Activated T-helper 1 cell treated with anti-CD3 and anti-CD28 coated beads, Interleukin-12 subunit alpha, Interleukin-12 subunit beta, Interleukin-2, Interleukin-4 antibody, amounts not matched to agents 30 ng/mL and 10 ng/mL and 1 ng/mL, durations not matched to agents 14 hours and 24 hours and 36 hours (primary cell): ENCODE measurements at regions of chr20 and their contacts with region 1.

Region 1: GRCh38 chr20:46545077-46545826 is 5.2 kb downstream of the OCSTAMP start:
- DNase-seq: peak; percentile 41
- H3K4me3 Mint-ChIP-seq: peak overlapping the region; percentile 68
- H3K27ac Mint-ChIP-seq: peak overlapping the region; percentile 96
- H3K4me1 Mint-ChIP-seq: peaks cover 11% of the 10 kb centered on the region
- H3K27me3 Mint-ChIP-seq: peaks cover 5% of the 10 kb centered on the region

Region 2: GRCh38 chr20:46307139-46307998 is 237.9 kb before region 1 on chr20:
- intact Hi-C with region 1: no loop called
- DNase-seq: peak; percentile 45
- H3K4me3 Mint-ChIP-seq: peak overlapping the region; percentile 31
- H3K27ac Mint-ChIP-seq: no peak overlapping the region
- H3K4me1 Mint-ChIP-seq: peaks cover 7% of the 10 kb centered on the region
- H3K27me3 Mint-ChIP-seq: peaks cover 71% of the 10 kb centered on the region

Region 3: DNA sequence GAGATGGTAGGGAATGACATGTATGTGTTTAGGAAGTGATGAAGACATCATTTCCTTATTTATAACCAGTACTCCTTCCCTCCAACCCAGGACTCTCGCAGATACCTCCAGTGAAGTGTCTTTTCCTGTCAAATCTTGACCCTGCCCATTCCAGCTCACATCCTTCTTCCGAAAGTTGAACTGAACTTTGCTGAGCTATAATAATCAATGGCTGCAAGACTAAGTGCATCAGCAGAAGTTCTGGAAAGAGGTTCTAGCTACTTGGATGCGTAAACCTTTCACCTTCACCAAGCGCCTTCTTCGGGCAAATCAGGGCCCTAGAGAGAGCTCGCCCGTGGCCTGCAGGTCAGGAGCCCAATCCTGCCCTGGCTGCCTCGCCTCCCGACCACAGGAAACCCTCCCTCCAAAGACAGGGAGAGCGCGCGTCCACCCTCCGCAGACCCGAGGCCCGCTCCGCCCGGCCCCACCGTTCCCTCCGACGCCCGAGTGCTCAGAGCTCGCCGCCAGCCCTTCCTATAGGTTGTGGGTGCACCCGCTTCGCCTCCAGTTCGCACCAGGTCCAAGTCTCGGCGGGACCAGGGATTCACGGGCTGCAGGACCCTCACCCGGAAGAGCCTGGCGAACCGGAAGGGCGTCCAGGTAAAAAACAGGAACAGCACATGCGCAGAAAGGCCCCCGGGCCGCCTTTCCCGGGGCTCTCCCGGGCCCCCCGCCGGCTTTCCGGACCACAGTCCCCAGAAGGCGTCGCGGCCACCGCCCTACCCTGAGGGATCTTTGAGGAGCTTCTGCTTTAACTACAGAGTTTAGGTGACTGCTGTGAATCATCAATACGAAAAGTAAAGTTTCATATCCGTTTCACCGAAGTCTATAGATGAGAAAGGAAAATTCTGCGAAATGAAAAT is 32.1 kb before region 1 on chr20 and contains the start of gene ZNF334:
- intact Hi-C with region 1: loop called (anchors 2 kb)
- DNase-seq: peak; percentile 21
- H3K4me3 Mint-ChIP-seq: peak within 1 kb of the TSS; percentile 81
- H3K27ac Mint-ChIP-seq: peak within 1 kb of the TSS; percentile 59
- H3K4me1 Mint-ChIP-seq: peaks cover 30% of the 10 kb centered on the region
- H3K27me3 Mint-ChIP-seq: no peaks in the 10 kb centered on the region
- total RNA-seq, gene ZNF334: 1.2 and 1.7 TPM in 2 replicates

Region 4: GRCh38 chr20:46562373-46563169 is 17.3 kb after region 1 on chr20:
- intact Hi-C with region 1: loop called (anchors 1 kb)
- DNase-seq: peak; percentile 53
- H3K4me3 Mint-ChIP-seq: no peak overlapping the region
- H3K27ac Mint-ChIP-seq: no peak overlapping the region
- H3K4me1 Mint-ChIP-seq: peaks cover 36% of the 10 kb centered on the region
- H3K27me3 Mint-ChIP-seq: peaks cover 6% of the 10 kb centered on the region

Region 5: DNA sequence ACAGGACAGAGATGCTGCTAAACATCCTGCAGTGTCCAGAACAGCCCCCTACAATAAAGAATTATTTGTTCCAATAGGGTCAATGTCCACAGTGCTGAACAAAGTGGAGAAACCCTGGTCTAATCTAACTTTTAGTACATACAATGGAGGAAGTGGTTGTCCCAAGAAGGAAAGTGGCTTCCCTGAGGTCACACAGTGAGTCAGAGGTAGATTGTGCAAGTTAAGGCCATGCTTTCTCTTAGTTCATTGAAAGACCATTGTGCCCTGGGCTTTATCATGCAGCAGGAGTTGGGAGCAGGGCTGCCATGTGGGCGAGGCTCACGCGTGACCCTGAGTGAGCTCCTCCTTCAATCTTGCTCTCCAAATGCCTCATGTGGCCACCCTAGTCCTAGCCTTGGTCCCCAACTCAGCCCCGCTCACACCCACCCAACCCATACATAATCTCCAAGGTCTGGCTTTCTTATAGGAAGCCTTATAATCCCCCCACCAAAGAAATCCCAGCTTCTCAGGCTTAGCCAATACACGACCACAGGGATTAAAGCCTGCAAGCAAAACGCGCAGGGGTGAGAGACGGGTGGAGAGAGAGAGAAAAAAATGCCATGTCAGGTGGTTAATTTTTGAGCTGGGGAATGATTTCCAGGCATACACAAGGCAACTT is 86.1 kb after region 1 on chr20:
- intact Hi-C with region 1: loop called (anchors 2 kb)
- DNase-seq: no peak
- H3K4me3 Mint-ChIP-seq: no peak overlapping the region
- H3K27ac Mint-ChIP-seq: no peak overlapping the region
- H3K4me1 Mint-ChIP-seq: peaks cover 7% of the 10 kb centered on the region
- H3K27me3 Mint-ChIP-seq: peaks cover 23% of the 10 kb centered on the region

Region 6: GRCh38 chr20:46670585-46671584 is 125.6 kb after region 1 on chr20:
- intact Hi-C with region 1: no loop called
- DNase-seq: no peak
- H3K4me3 Mint-ChIP-seq: no peak overlapping the region
- H3K27ac Mint-ChIP-seq: no peak overlapping the region
- H3K4me1 Mint-ChIP-seq: no peaks in the 10 kb centered on the region
- H3K27me3 Mint-ChIP-seq: peaks cover 3% of the 10 kb centered on the region

Region 7: GRCh38 chr20:46681032-46681854 is 136.0 kb after region 1 on chr20:
- intact Hi-C with region 1: loop called (anchors 1 kb)
- DNase-seq: peak; percentile 57
- H3K4me3 Mint-ChIP-seq: no peak overlapping the region
- H3K27ac Mint-ChIP-seq: no peak overlapping the region
- H3K4me1 Mint-ChIP-seq: peaks cover 32% of the 10 kb centered on the region
- H3K27me3 Mint-ChIP-seq: no peaks in the 10 kb centered on the region